ENCODE measurements at regions of chr5 and their contacts with region 1.

Region 1: GRCh38 chr5:74394916-74395781 is 245.4 kb downstream of the ENC1 start:
- DNase-seq: peak; percentile 94
- H3K4me3 ChIP-seq: no peak overlapping the region
- H3K27ac ChIP-seq: peak overlapping the region; percentile 90
- H3K4me1 ChIP-seq: peaks cover 29% of the 10 kb centered on the region
- H3K27me3 ChIP-seq: no peaks in the 10 kb centered on the region
- CTCF ChIP-seq: peak; percentile 9 to 36

Region 2: GRCh38 chr5:73985145-73985544 is 410.0 kb before region 1 on chr5:
- CTCF ChIA-PET with region 1: no interaction called
- dilution Hi-C with region 1: no loop called
- in situ Hi-C with region 1: no loop called
- intact Hi-C with region 1: loop called (anchors 2 kb)
- DNase-seq: peak; percentile 83
- H3K4me3 ChIP-seq: no peak overlapping the region
- H3K27ac ChIP-seq: peak overlapping the region; percentile 38
- H3K4me1 ChIP-seq: peaks cover 30% of the 10 kb centered on the region
- H3K27me3 ChIP-seq: no peaks in the 10 kb centered on the region
- CTCF ChIP-seq: peak; percentile 54 to 56

Region 3: DNA sequence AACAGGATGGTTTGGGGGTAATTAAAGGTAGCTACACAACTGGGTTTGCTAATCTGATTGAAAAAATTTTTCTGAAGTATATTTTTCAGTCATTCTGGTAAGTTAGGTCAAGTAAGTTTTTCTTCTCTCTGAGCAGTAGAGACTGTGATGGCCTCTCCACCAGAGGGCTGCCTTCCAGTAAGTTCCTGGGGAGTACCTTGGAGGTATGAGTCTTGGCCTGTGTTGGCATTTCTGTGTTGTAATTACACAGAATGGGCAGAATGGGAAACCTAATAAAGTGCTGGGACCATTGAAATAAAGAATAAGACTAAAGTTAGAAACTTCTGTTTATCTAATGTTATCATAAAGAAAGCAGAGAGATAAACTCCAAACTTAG is 338.4 kb before region 1 on chr5:
- CTCF ChIA-PET with region 1: no interaction called
- dilution Hi-C with region 1: no loop called
- in situ Hi-C with region 1: no loop called
- intact Hi-C with region 1: loop called (anchors 2 kb)
- DNase-seq: peak; percentile 47
- H3K4me3 ChIP-seq: no peak overlapping the region
- H3K27ac ChIP-seq: no peak overlapping the region
- H3K4me1 ChIP-seq: peaks cover 6% of the 10 kb centered on the region
- H3K27me3 ChIP-seq: no peaks in the 10 kb centered on the region
- CTCF ChIP-seq: peak; percentile 49 to 83

Region 4: GRCh38 chr5:74212336-74212735 is 182.8 kb before region 1 on chr5:
- CTCF ChIA-PET with region 1: no interaction called
- dilution Hi-C with region 1: no loop called
- in situ Hi-C with region 1: no loop called
- intact Hi-C with region 1: loop called (anchors 1 kb)
- DNase-seq: no peak
- H3K4me3 ChIP-seq: no peak overlapping the region
- H3K27ac ChIP-seq: no peak overlapping the region
- H3K4me1 ChIP-seq: no peaks in the 10 kb centered on the region
- H3K27me3 ChIP-seq: no peaks in the 10 kb centered on the region
- CTCF ChIP-seq: peak; percentile 38 to 52

Region 5: DNA sequence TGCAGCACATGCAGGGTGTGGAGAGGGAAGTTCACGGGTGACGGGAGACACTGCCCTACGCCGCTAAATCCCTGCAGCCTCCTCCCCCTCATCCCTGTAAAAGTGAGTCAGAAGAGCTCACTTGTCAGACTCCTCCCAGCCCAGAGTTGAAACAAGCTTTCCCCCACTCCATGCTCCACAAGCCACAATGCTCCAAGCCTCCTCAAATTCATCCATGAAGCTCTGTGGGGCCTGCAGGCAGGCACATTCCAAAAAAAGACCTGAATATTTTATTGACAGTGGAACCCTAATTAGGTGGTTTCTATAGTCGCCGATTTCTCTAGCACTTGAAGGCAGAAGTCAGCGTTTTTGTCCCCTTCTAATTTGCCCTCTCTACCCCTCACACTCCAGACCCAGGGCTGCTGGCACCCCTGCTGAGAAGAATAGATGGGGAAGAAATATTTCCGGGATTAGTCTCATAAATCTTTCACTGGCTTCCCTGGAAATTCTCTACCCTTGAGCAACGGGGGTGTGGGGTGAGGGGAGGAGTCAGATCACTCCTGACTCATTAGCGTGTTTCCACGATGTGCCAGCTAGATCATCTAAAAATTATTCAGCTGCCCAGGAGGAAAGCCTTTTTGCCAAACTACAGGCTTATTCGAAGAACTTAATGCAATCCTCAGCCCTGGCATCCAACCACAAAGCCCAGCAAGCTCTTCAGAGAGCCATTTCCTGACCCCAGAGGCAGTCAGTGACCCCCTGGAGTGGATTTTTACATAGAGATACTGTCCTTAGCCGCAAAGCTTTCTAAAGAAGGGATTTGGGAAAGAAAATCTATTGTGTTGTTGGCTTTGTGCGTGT is 148.2 kb after region 1 on chr5:
- CTCF ChIA-PET with region 1: no interaction called
- dilution Hi-C with region 1: no loop called
- in situ Hi-C with region 1: no loop called
- intact Hi-C with region 1: loop called (anchors 2 kb)
- DNase-seq: peak; percentile 91
- H3K4me3 ChIP-seq: peak overlapping the region in 1 of 3 experiments; percentile 16
- H3K27ac ChIP-seq: peak overlapping the region; percentile 92
- H3K4me1 ChIP-seq: peaks cover 46% of the 10 kb centered on the region
- H3K27me3 ChIP-seq: no peaks in the 10 kb centered on the region
- CTCF ChIP-seq: no peak

Measured in mammary epithelial cell (primary cell).